CD4-positive, alpha-beta memory T cell (primary cell): ENCODE measurements at regions of chr2 and their contacts with region 1.

Region 1: GRCh38 chr2:168246483-168247340 is 683 bp downstream of the STK39 start:
- DNase-seq: peak; percentile 86 to 95 (median 88)
- H3K4me3 ChIP-seq: peak overlapping the region; percentile 58 to 66
- H3K4me3 Mint-ChIP-seq: peak overlapping the region; percentile 91 to 94 (median 93)
- H3K27ac ChIP-seq: peak overlapping the region; percentile 66
- H3K27ac Mint-ChIP-seq: peak overlapping the region; percentile 89 to 96 (median 96)
- H3K4me1 ChIP-seq: peaks cover 49% of the 10 kb centered on the region
- H3K4me1 Mint-ChIP-seq: peaks cover 26 to 53% (median 32%) of the 10 kb centered on the region in 4 donors
- H3K27me3 ChIP-seq: no peaks in the 10 kb centered on the region
- H3K27me3 Mint-ChIP-seq: no peaks in the 10 kb centered on the region

Region 2: GRCh38 chr2:167783261-167784075 is 463.2 kb before region 1 on chr2:
- CTCF ChIA-PET with region 1: no interaction called
- POLR2A ChIA-PET with region 1: no interaction called
- intact Hi-C with region 1: no loop called
- DNase-seq: no peak
- H3K4me3 ChIP-seq: no peak overlapping the region
- H3K4me3 Mint-ChIP-seq: no peak overlapping the region
- H3K27ac ChIP-seq: no peak overlapping the region
- H3K27ac Mint-ChIP-seq: no peak overlapping the region
- H3K4me1 ChIP-seq: no peaks in the 10 kb centered on the region
- H3K4me1 Mint-ChIP-seq: no peaks in the 10 kb centered on the region
- H3K27me3 ChIP-seq: no peaks in the 10 kb centered on the region
- H3K27me3 Mint-ChIP-seq: no peaks in the 10 kb centered on the region

Region 3: GRCh38 chr2:168192839-168193616 is 53.7 kb before region 1 on chr2:
- CTCF ChIA-PET with region 1: no interaction called
- POLR2A ChIA-PET with region 1: interaction called, 4 read pairs
- intact Hi-C with region 1: loop called (anchors 1 kb)
- DNase-seq: peak; percentile 64 to 80 (median 70)
- H3K4me3 ChIP-seq: peak overlapping the region in 1 of 2 donors; percentile 25
- H3K4me3 Mint-ChIP-seq: peak overlapping the region; percentile 60 to 87 (median 76)
- H3K27ac ChIP-seq: no peak overlapping the region
- H3K27ac Mint-ChIP-seq: peak overlapping the region; percentile 5 to 91 (median 74)
- H3K4me1 ChIP-seq: peaks cover 76% of the 10 kb centered on the region
- H3K4me1 Mint-ChIP-seq: peaks cover 61 to 92% (median 75%) of the 10 kb centered on the region in 4 donors
- H3K27me3 ChIP-seq: no peaks in the 10 kb centered on the region
- H3K27me3 Mint-ChIP-seq: no peaks in the 10 kb centered on the region

Region 4: DNA sequence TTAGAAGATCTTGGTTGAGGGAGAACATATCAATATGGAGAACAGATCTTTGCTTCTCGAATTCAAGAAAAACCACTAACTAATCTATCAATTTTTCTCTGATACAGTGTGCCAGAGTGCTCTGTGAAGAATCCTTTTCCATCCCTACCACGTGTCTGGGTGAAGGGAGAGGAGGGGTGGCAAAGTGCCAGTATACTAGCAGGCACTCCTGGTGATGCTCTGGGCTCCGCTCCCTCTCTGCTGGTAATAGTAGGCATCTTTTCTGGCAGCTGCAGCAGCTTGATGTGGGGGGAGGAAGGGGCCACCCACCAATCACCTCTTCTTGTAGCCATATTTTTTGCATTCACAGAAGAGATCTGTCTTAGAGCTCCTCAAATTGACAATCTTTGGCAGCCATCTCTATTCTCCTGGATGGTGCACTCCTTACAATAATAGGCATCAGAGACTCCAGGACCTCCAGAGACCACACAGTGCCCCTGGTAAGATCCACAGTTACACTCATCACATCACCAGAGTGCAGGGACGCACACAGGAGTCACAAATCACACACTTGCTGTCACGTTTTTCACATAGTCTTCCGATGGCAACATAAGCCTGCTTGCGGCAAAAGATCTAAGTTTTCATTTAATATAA is 15.0 kb before region 1 on chr2:
- CTCF ChIA-PET with region 1: interaction called, 4 read pairs
- POLR2A ChIA-PET with region 1: no interaction called
- intact Hi-C with region 1: loop called (anchors 1 kb)
- DNase-seq: no peak
- H3K4me3 ChIP-seq: no peak overlapping the region
- H3K4me3 Mint-ChIP-seq: peak overlapping the region in 1 of 8 donors; percentile 30
- H3K27ac ChIP-seq: no peak overlapping the region
- H3K27ac Mint-ChIP-seq: peak overlapping the region in 2 of 7 donors; percentile 2 to 5
- H3K4me1 ChIP-seq: peaks cover 24% of the 10 kb centered on the region
- H3K4me1 Mint-ChIP-seq: peaks cover 27 to 54% (median 40%) of the 10 kb centered on the region in 4 donors
- H3K27me3 ChIP-seq: no peaks in the 10 kb centered on the region
- H3K27me3 Mint-ChIP-seq: no peaks in the 10 kb centered on the region

Region 5: DNA sequence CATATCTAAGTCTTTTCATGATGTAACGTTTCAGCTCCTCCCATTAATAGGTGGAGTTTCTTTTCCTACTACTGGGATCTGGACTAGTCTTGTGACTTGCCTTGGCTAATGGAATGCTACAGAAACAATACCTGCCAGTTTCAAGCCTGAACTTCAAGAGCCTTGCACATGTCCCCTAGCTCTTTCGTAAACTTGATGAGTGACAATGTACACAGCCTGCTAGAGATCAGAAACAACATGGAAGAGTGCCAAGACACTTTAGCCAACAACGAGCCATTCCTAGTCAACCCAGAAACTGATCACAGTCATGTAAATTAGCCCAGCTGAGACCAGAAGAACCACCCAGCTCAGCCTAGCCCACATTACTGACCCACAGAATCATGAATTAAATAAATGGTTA is 25.5 kb after region 1 on chr2:
- CTCF ChIA-PET with region 1: no interaction called
- POLR2A ChIA-PET with region 1: no interaction called
- intact Hi-C with region 1: no loop called
- DNase-seq: no peak
- H3K4me3 ChIP-seq: no peak overlapping the region
- H3K4me3 Mint-ChIP-seq: no peak overlapping the region
- H3K27ac ChIP-seq: no peak overlapping the region
- H3K27ac Mint-ChIP-seq: no peak overlapping the region
- H3K4me1 ChIP-seq: no peaks in the 10 kb centered on the region
- H3K4me1 Mint-ChIP-seq: no peaks in the 10 kb centered on the region
- H3K27me3 ChIP-seq: no peaks in the 10 kb centered on the region
- H3K27me3 Mint-ChIP-seq: peaks cover 0 to 3% of the 10 kb centered on the region in 2 donors

Region 6: GRCh38 chr2:168455648-168456520 is 209.2 kb after region 1 on chr2 and contains the start of gene CERS6:
- CTCF ChIA-PET with region 1: no interaction called
- POLR2A ChIA-PET with region 1: no interaction called
- intact Hi-C with region 1: loop called (anchors 10 kb)
- DNase-seq: peak; percentile 47 to 68 (median 59)
- H3K4me3 ChIP-seq: peak within 1 kb of the TSS; percentile 61 to 69
- H3K4me3 Mint-ChIP-seq: peak within 1 kb of the TSS in 5 of 8 donors; percentile 83 to 91 (median 86)
- H3K27ac ChIP-seq: no peak within 1 kb of the TSS
- H3K27ac Mint-ChIP-seq: peak within 1 kb of the TSS in 3 of 7 donors; percentile 22 to 59 (median 43)
- H3K4me1 ChIP-seq: peaks cover 23% of the 10 kb centered on the region
- H3K4me1 Mint-ChIP-seq: peaks cover 25 to 42% (median 33%) of the 10 kb centered on the region in 4 donors
- H3K27me3 ChIP-seq: no peaks in the 10 kb centered on the region
- H3K27me3 Mint-ChIP-seq: no peaks in the 10 kb centered on the region
- total RNA-seq, gene CERS6: 10.1 to 11.3 TPM

Region 7: GRCh38 chr2:168890006-168890782 is 643.5 kb after region 1 on chr2 and contains the start of gene SPC25:
- CTCF ChIA-PET with region 1: no interaction called
- POLR2A ChIA-PET with region 1: no interaction called
- intact Hi-C with region 1: loop called (anchors 10 kb)
- DNase-seq: peak; percentile 86 to 90 (median 87)
- H3K4me3 ChIP-seq: peak within 1 kb of the TSS; percentile 38 to 58
- H3K4me3 Mint-ChIP-seq: peak within 1 kb of the TSS; percentile 93 to 98 (median 94)
- H3K27ac ChIP-seq: peak within 1 kb of the TSS; percentile 4
- H3K27ac Mint-ChIP-seq: peak within 1 kb of the TSS; percentile 10 to 88 (median 84)
- H3K4me1 ChIP-seq: peaks cover 6% of the 10 kb centered on the region
- H3K4me1 Mint-ChIP-seq: peaks cover 5 to 12% (median 10%) of the 10 kb centered on the region in 4 donors
- H3K27me3 ChIP-seq: no peaks in the 10 kb centered on the region
- H3K27me3 Mint-ChIP-seq: peaks cover 2 to 4% of the 10 kb centered on the region in 2 donors
- total RNA-seq, gene SPC25: 0.33 TPM in 1 of 2 experiments, not detected in the other